ENCODE measurements at regions of chr19 and their contacts with region 1.

Region 1: DNA sequence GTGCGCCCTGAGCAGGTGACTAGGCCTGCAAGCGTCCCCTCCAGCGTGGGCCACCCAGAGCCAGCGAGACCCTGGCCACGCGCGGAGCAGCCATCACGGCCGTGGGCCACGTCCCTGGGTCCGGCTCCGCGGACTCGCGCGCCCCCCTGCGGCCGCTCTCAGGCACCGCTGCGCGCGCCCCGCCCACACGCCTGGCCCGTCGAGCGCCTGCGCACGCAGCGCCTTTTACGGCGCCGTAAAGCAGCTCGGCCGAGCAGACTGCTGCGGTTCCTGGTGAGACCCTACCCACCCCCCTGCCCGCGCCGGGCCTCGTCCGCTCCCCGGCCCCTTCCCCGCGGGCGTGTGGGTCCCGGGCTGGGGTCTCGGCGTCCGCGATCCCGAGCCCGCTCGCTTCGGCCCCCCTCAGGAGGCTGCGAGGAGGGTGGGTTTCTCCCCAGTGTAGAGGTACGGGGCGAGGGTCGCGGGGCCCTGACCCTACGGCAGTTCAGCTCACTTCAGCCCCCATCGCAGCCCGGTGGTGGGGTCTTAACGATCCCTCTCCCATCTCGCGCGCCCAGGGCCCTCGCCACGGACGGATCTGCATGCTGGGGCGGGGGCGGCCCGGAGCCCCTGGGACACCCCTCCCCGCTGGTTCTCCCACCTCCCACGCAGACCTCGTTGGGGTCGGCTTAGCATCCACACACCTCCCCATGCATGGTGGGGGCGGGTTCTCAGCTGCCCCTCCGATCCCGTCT is at the start of gene TRAPPC5:
- DNase-seq: peak; percentile 84
- H3K4me3 Mint-ChIP-seq: peak within 1 kb of the TSS; percentile 89
- H3K27ac Mint-ChIP-seq: peak within 1 kb of the TSS; percentile 96
- H3K4me1 Mint-ChIP-seq: peaks cover 51% of the 10 kb centered on the region
- H3K27me3 Mint-ChIP-seq: peaks cover 17% of the 10 kb centered on the region
- total RNA-seq, gene TRAPPC5: 105 to 106 TPM

Region 2: DNA sequence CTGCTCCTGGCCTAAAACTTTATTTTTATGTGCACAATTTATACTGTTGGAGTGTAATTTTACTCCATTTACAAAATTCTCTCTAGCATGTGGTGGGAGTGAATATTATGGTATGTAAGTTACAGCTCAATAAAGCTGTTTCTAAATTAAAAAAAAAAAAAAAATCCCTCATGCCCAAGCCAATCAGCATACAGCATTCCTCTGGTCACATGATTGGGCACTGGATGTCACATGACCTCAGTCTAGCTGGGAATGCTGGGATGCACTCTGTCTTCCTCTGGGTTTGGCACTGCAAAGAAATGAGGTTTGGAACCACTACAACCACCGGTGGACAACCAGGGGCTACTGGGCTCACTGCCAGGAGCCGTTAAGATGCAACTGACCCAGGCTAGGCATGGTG is 543.7 kb before region 1 on chr19:
- CTCF ChIA-PET with region 1: no interaction called
- POLR2A ChIA-PET with region 1: no interaction called
- DNase-seq: no peak
- H3K4me3 Mint-ChIP-seq: no peak overlapping the region
- H3K27ac Mint-ChIP-seq: no peak overlapping the region
- H3K4me1 Mint-ChIP-seq: no peaks in the 10 kb centered on the region
- H3K27me3 Mint-ChIP-seq: no peaks in the 10 kb centered on the region

Region 3: DNA sequence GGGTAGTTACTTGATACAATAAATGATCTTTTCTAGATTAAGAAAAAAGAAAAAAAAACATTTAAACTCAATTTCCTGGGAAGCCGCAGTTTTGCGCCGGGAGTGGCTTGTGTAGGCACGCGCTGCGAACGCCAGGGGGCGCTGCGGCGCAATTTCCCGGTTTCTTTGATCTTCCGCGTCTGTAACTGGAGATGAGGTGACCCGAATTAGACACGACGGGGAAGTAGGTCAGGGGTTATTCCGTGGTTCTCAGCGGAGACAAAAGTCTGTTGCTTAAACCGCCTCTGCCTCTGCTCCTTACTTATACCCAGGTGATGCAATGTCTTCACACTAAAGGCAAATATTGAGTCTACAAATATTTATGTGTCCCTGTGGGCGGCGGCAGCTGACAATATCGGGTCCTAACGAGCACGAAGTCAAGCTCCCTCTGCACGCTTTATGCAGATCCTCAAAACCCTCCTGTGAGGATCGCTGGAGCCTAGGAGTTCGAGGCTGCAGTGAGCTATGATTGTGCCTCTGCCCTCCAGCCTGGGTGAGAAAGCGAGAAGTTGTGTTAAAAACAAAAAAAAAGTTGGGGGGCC is 28.6 kb before region 1 on chr19:
- CTCF ChIA-PET with region 1: interaction called, 20 read pairs
- POLR2A ChIA-PET with region 1: no interaction called
- DNase-seq: peak; percentile 86
- H3K4me3 Mint-ChIP-seq: peak overlapping the region; percentile 47
- H3K27ac Mint-ChIP-seq: peak overlapping the region; percentile 76
- H3K4me1 Mint-ChIP-seq: peaks cover 16% of the 10 kb centered on the region
- H3K27me3 Mint-ChIP-seq: peaks cover 2% of the 10 kb centered on the region

Region 4: GRCh38 chr19:7670150-7670783 is 10.5 kb before region 1 on chr19:
- CTCF ChIA-PET with region 1: interaction called, 20 read pairs
- POLR2A ChIA-PET with region 1: no interaction called
- DNase-seq: peak; percentile 33
- H3K4me3 Mint-ChIP-seq: peak overlapping the region; percentile 38
- H3K27ac Mint-ChIP-seq: no peak overlapping the region
- H3K4me1 Mint-ChIP-seq: peaks cover 23% of the 10 kb centered on the region
- H3K27me3 Mint-ChIP-seq: peaks cover 26% of the 10 kb centered on the region

Region 5: GRCh38 chr19:7759156-7759555 is 78.4 kb after region 1 on chr19:
- CTCF ChIA-PET with region 1: no interaction called
- POLR2A ChIA-PET with region 1: no interaction called
- DNase-seq: no peak
- H3K4me3 Mint-ChIP-seq: no peak overlapping the region
- H3K27ac Mint-ChIP-seq: no peak overlapping the region
- H3K4me1 Mint-ChIP-seq: no peaks in the 10 kb centered on the region
- H3K27me3 Mint-ChIP-seq: peaks cover 8% of the 10 kb centered on the region

Region 6: GRCh38 chr19:7799640-7800355 is 119.0 kb after region 1 on chr19:
- CTCF ChIA-PET with region 1: interaction called, 17 read pairs
- POLR2A ChIA-PET with region 1: no interaction called
- DNase-seq: peak; percentile 62
- H3K4me3 Mint-ChIP-seq: no peak overlapping the region
- H3K27ac Mint-ChIP-seq: peak overlapping the region; percentile 36
- H3K4me1 Mint-ChIP-seq: peaks cover 3% of the 10 kb centered on the region
- H3K27me3 Mint-ChIP-seq: peaks cover 41% of the 10 kb centered on the region

Region 7: DNA sequence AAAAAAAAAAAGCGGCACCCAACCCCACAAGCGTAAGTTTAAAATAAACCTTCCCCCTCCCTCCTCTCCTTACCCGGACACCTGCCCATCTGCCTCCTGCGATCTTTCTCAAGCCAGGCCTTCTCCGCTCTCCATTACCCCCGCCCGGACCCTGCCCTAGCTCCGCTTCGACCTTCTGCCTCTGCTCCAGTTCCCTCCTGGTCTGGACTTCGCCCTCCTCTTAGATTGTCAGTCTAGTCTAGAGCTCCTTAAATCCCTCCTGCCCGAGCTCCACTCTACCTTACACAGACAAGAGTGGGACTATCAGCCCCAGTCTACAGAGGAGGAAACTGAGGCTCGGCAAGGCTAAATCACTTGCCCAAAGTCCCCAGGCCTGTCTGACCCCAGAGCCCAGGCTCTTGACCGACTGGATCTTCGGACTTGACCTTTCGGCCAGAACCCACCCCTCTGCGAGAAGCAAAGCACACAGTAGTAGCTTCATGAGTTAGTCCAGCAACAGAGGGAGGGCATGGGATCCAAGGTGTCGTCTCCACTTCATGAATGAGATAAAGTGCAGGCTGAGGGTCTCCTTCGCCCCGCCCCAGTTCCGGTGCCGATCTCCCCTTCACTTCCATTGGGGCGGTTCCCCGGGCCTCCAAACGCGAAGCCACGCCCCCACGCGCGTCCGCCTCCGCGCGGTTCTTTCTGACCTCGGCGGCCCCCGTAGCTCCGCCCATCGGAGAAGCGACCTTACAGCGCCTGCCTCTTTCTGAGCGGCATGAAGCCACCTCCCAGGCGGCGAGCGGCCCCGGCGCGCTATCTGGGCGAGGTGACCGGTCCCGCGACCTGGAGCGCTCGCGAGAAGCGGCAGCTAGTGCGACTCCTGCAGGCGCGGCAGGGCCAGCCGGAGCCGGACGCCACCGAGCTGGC is 239.1 kb after region 1 on chr19 and contains the start of gene SNAPC2:
- CTCF ChIA-PET with region 1: interaction called, 10 read pairs
- POLR2A ChIA-PET with region 1: no interaction called
- DNase-seq: peak; percentile 97
- H3K4me3 Mint-ChIP-seq: peak within 1 kb of the TSS; percentile 87
- H3K27ac Mint-ChIP-seq: peak within 1 kb of the TSS; percentile 94
- H3K4me1 Mint-ChIP-seq: peaks cover 38% of the 10 kb centered on the region
- H3K27me3 Mint-ChIP-seq: peaks cover 35% of the 10 kb centered on the region
- total RNA-seq, gene SNAPC2: 18.6 to 19.1 TPM